ENCODE measurements at regions of chr3 and their contacts with region 1.

Region 1: DNA sequence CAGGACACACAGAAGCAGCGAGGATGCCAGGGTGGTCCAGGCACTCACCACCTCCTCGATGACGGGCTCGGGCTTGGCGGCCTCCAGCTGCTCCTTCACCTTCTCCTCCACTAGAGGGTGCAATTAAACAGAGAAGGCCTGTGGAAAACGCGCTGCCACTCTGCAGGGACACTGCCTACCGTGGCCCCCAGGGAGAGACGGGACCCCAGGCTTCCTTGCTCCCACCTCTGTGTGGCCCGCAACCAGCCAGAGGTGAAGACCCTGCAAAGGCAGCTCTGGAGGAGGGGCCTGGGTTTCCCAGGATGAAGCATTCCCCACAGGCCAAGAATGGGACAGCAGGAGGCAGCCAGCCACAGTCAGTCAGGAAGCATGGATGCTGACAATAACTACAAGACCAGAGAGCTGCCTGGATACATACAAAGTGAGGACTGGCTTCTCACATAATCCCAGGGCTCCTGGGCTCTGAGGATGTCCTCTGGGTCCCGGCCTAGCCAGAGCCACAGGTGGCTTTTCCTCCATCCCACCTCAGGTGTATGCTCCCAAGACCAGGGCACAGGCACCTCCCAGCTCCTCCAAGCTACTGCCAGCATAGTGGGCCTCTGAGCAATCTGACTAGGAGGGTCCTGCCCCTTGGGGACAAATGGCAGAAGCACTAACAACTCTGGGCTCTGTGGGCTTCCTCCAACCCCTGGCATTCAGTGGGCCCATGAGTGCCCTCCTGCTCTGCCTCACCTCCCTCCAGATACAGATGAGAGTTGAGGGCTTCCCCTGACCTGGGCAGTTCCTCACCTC is 46.2 kb downstream of the PTH1R start:
- DNase-seq: no peak
- H3K4me3 ChIP-seq: no peak overlapping the region
- H3K27ac ChIP-seq: no peak overlapping the region
- H3K4me1 ChIP-seq: peaks cover 55% of the 10 kb centered on the region
- H3K27me3 ChIP-seq: no peaks in the 10 kb centered on the region
- CTCF ChIP-seq: peak in 2 of 3 experiments; percentile 5 to 36
- POLR2A ChIP-seq: no peak

Region 2: DNA sequence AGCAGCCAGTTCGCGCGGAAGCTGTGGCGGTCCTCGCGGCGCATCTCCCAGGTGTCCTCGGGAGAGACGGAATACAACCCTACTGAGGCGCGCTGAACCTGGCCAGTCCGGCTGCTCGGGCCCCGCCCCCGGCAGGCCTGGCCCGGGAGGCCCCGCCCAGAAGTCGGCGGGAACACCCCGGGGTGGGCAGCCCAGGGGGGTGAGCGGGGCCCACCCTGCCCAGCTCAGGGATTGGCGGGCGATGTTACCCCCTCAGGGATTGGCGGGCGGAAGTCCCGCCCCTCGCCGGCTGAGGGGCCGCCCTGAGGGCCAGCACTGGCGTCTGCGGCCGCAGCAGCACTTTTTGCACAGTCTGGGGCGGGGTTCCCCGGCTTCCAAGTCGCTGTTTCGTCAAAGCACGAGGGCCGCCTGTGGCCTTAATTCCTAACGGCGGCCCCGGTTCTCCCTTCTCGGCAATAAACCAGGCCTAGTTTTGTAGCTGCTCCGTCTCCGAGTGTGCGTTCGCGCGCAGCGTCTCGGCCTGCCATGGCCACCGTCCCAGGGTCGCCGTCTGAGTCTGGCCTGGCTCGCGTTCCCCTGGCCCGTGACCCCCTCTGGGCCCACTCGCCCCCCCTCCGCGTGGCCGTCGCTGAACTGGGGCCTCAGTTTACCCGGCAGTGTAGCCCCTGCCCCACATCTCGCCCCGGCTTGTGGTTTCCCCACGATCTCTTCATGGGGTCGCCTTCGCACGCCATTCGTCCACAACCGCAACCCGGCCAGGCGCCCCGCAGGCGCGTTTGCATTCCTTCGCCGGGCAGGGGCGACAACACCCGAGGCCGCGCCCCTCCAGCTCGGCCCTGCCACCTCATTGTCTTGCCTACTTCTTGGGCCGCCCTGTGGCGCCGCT is 85.7 kb after region 1 on chr3:
- intact Hi-C with region 1: loop called (anchors 10 kb)
- DNase-seq: no peak
- H3K4me3 ChIP-seq: peak overlapping the region; percentile 53 to 59
- H3K27ac ChIP-seq: peak overlapping the region; percentile 87
- H3K4me1 ChIP-seq: peaks cover 14% of the 10 kb centered on the region
- H3K27me3 ChIP-seq: no peaks in the 10 kb centered on the region
- CTCF ChIP-seq: no peak
- POLR2A ChIP-seq: peak in 1 of 2 donors; percentile 71

Region 3: DNA sequence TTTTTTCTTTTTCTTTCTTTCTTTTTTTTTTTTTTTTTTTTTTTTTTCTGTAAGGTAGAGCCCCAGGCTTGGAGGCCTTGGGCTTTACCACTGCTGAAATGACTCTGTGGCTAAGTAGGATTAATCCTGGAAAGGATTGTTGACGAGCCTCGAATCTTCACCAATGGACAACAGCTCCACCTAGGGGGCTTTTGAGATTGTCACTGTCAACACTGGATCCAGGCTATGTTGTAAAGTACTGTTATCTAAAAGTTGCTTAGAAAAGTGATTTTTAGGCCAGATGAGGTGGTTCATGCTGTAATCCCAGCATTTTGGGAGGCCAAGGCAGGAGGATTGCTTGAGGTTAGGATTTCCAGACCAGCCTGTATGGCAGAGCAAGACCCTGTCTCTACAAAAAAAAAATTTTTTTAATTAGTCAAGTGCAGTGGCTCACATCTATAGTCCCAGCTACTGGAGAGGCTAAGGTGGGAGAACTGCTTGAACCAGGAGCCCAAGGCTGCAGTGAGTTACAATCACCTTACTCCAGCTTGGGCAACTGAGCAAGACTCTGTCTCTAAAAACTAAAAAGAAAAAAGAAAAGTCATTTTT is 400.6 kb after region 1 on chr3:
- intact Hi-C with region 1: loop called (anchors 10 kb)
- DNase-seq: peak in 1 of 2 donors; percentile 58
- H3K4me3 ChIP-seq: no peak overlapping the region
- H3K27ac ChIP-seq: no peak overlapping the region
- H3K4me1 ChIP-seq: peaks cover 3% of the 10 kb centered on the region
- H3K27me3 ChIP-seq: no peaks in the 10 kb centered on the region
- CTCF ChIP-seq: peak; percentile 48 to 70 (median 63)
- POLR2A ChIP-seq: no peak

Measured in vagina (tissue), 2 donors.